CD4-positive, alpha-beta memory T cell (primary cell): ENCODE measurements at regions of chr20 and their contacts with region 1.

Region 1: DNA sequence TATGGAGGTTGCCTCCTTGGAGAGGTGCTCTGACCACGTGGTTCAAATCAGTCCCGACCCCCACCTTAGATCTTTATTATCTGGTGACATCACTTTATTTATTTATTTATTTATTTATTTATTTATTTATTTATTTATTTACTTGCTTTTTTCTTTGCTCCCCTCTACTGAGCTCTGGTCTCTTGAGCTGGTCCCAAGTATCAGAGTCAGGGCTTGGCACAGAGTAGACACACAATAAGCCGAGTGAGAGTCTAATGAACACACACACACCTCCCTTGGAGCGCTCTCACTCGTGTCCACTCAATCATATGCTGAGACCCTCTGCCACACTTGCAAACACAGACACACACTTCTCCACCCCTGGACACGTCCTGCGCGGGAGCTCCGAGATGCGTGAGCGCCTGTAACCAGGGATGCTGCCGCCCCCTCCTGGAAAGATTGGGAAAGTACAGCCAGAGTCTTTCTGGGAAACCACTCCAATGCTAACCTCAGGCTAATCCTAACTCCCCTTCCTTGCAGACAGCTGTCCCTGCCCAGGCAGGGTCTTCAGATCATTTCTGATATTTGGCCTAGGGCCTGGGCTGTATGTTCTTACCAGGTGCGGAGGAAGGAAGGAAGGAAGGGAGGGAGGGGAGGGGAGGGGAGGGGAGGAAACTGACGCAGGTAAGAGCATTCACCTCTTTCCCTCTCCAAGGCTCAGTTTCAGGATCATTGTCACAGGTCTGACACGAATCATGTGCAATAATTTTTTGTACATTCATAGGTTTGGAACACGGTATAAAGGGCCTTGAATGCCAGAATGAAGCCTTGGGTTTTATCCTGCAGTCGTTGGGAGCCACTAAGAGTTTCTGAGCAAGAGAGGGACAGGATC is 70.9 kb downstream of the STK35 start:
- DNase-seq: peak; percentile 48 to 59 (median 58)
- H3K4me3 ChIP-seq: no peak overlapping the region
- H3K4me3 Mint-ChIP-seq: no peak overlapping the region
- H3K27ac ChIP-seq: no peak overlapping the region
- H3K27ac Mint-ChIP-seq: peak overlapping the region in 1 of 7 donors; percentile 29
- H3K4me1 ChIP-seq: no peaks in the 10 kb centered on the region
- H3K4me1 Mint-ChIP-seq: peaks cover 2 to 4% (median 3%) of the 10 kb centered on the region in 4 donors
- H3K27me3 ChIP-seq: no peaks in the 10 kb centered on the region
- H3K27me3 Mint-ChIP-seq: peaks cover 3 to 6% of the 10 kb centered on the region in 2 donors

Region 2: GRCh38 chr20:1965520-1966351 is 206.8 kb before region 1 on chr20:
- CTCF ChIA-PET with region 1: interaction called, 151 read pairs
- POLR2A ChIA-PET with region 1: interaction called, 5 read pairs
- intact Hi-C with region 1: no loop called
- DNase-seq: peak; percentile 46 to 62 (median 54)
- H3K4me3 ChIP-seq: no peak overlapping the region
- H3K4me3 Mint-ChIP-seq: peak overlapping the region in 6 of 8 donors; percentile 11 to 62 (median 44)
- H3K27ac ChIP-seq: no peak overlapping the region
- H3K27ac Mint-ChIP-seq: no peak overlapping the region
- H3K4me1 ChIP-seq: peaks cover 10% of the 10 kb centered on the region
- H3K4me1 Mint-ChIP-seq: peaks cover 3 to 9% (median 5%) of the 10 kb centered on the region in 4 donors
- H3K27me3 ChIP-seq: no peaks in the 10 kb centered on the region
- H3K27me3 Mint-ChIP-seq: peaks cover 20 to 24% of the 10 kb centered on the region in 2 donors

Region 3: DNA sequence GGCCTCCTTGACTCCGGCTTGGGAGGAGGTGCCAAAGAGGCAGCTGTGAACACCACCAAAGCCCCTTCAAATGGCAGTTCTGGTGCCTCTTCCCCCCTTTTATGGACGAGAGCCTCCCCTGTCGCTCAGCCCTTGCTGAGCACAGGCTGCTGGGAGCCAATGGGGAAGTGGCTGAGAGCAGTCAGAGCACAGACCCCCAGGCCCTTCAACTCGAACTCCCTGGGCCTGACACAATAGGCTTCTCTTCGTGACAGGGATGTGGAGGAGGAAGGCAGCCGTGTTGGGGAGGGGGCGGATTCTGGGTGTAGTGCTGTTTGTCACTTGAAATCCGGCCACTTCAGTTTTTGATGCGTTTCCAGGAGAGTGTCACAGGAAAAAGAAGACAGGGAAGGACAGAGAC is 178.6 kb before region 1 on chr20 and contains the start of gene PDYN:
- CTCF ChIA-PET with region 1: no interaction called
- POLR2A ChIA-PET with region 1: no interaction called
- intact Hi-C with region 1: no loop called
- DNase-seq: no peak
- H3K4me3 ChIP-seq: no peak within 1 kb of the TSS
- H3K4me3 Mint-ChIP-seq: no peak within 1 kb of the TSS
- H3K27ac ChIP-seq: no peak within 1 kb of the TSS
- H3K27ac Mint-ChIP-seq: no peak within 1 kb of the TSS
- H3K4me1 ChIP-seq: no peaks in the 10 kb centered on the region
- H3K4me1 Mint-ChIP-seq: peaks cover 0 to 2% (median 0%) of the 10 kb centered on the region in 4 donors
- H3K27me3 ChIP-seq: peaks cover 10% of the 10 kb centered on the region
- H3K27me3 Mint-ChIP-seq: peaks cover 35 to 57% of the 10 kb centered on the region in 2 donors
- total RNA-seq, gene PDYN: not detected

Region 4: DNA sequence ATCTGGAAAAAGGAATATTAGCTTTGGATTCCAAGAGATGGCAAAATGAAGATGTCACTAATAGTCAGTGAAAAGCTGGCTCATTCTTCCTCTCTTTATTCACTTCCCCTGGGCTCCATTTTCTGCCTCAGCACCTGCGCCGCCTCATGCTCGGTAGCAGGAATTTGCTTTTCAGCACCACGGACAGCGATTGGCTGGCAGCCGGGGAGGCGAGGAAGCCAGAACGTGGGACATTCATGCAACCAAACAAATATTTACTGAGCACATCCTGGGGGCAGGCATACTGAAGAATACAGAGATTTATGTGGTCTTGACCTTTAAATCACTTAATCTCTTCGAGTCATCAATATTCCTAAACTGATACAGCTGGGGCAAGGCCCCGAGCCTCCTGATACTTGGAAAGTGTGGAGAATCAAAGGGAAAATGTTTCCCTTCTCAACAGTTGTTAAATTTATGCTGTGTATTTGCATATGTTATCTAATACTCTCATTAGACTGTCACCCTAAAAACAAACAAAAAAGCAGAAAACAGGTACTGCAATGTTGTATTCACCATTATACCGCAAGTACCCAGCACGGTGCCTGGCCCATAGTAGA is 166.6 kb before region 1 on chr20:
- CTCF ChIA-PET with region 1: interaction called, 52 read pairs
- POLR2A ChIA-PET with region 1: no interaction called
- intact Hi-C with region 1: no loop called
- DNase-seq: peak; percentile 39 to 51 (median 42)
- H3K4me3 ChIP-seq: no peak overlapping the region
- H3K4me3 Mint-ChIP-seq: no peak overlapping the region
- H3K27ac ChIP-seq: no peak overlapping the region
- H3K27ac Mint-ChIP-seq: no peak overlapping the region
- H3K4me1 ChIP-seq: no peaks in the 10 kb centered on the region
- H3K4me1 Mint-ChIP-seq: no peaks in the 10 kb centered on the region
- H3K27me3 ChIP-seq: peaks cover 4% of the 10 kb centered on the region
- H3K27me3 Mint-ChIP-seq: peaks cover 32 to 40% of the 10 kb centered on the region in 2 donors

Region 5: DNA sequence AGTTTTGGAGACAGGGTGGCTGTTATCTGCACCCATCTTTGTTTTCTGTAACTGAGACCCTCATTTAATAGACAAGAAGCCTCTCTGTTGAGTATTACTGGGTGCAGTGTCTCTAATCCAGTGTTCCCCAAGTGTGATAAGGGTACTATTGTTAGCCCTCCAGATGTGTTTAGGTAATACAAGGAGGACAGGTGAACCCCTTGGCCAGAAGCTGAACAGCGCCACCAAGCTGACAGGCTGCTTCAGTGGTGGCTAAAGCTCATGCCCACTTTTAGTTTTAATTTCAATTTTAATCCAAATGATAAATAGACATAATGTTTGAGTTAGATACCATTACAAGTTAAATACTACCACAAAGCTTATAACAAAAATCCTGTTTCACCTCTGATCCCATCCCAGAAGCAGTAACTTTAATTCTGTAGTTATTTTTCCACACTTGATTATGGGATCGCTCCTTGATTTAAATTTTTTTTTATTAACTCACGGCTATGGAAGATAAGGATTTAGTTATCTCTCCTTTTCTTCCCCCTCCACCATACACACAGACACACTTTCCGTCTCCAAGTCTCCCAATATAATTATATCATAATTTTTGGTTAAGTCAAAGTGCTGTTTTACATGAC is 79.3 kb before region 1 on chr20:
- CTCF ChIA-PET with region 1: no interaction called
- POLR2A ChIA-PET with region 1: no interaction called
- intact Hi-C with region 1: no loop called
- DNase-seq: peak in 2 of 5 donors; percentile 11 to 14
- H3K4me3 ChIP-seq: no peak overlapping the region
- H3K4me3 Mint-ChIP-seq: no peak overlapping the region
- H3K27ac ChIP-seq: no peak overlapping the region
- H3K27ac Mint-ChIP-seq: no peak overlapping the region
- H3K4me1 ChIP-seq: no peaks in the 10 kb centered on the region
- H3K4me1 Mint-ChIP-seq: no peaks in the 10 kb centered on the region
- H3K27me3 ChIP-seq: peaks cover 9% of the 10 kb centered on the region
- H3K27me3 Mint-ChIP-seq: peaks cover 32 to 34% of the 10 kb centered on the region in 2 donors

Region 6: GRCh38 chr20:2162125-2162822 is 10.3 kb before region 1 on chr20:
- CTCF ChIA-PET with region 1: interaction called, 20 read pairs
- POLR2A ChIA-PET with region 1: no interaction called
- intact Hi-C with region 1: no loop called
- DNase-seq: no peak
- H3K4me3 ChIP-seq: no peak overlapping the region
- H3K4me3 Mint-ChIP-seq: no peak overlapping the region
- H3K27ac ChIP-seq: no peak overlapping the region
- H3K27ac Mint-ChIP-seq: no peak overlapping the region
- H3K4me1 ChIP-seq: no peaks in the 10 kb centered on the region
- H3K4me1 Mint-ChIP-seq: no peaks in the 10 kb centered on the region
- H3K27me3 ChIP-seq: no peaks in the 10 kb centered on the region
- H3K27me3 Mint-ChIP-seq: no peaks in the 10 kb centered on the region

Region 7: GRCh38 chr20:2183381-2183780 is 10.8 kb after region 1 on chr20:
- CTCF ChIA-PET with region 1: interaction called, 19 read pairs
- POLR2A ChIA-PET with region 1: no interaction called
- intact Hi-C with region 1: no loop called
- DNase-seq: no peak
- H3K4me3 ChIP-seq: no peak overlapping the region
- H3K4me3 Mint-ChIP-seq: no peak overlapping the region
- H3K27ac ChIP-seq: no peak overlapping the region
- H3K27ac Mint-ChIP-seq: no peak overlapping the region
- H3K4me1 ChIP-seq: no peaks in the 10 kb centered on the region
- H3K4me1 Mint-ChIP-seq: peaks cover 0 to 4% (median 0%) of the 10 kb centered on the region in 4 donors
- H3K27me3 ChIP-seq: no peaks in the 10 kb centered on the region
- H3K27me3 Mint-ChIP-seq: no peaks in the 10 kb centered on the region

Region 8: GRCh38 chr20:2246069-2246491 is 73.5 kb after region 1 on chr20:
- CTCF ChIA-PET with region 1: no interaction called
- POLR2A ChIA-PET with region 1: no interaction called
- intact Hi-C with region 1: no loop called
- DNase-seq: no peak
- H3K4me3 ChIP-seq: no peak overlapping the region
- H3K4me3 Mint-ChIP-seq: no peak overlapping the region
- H3K27ac ChIP-seq: no peak overlapping the region
- H3K27ac Mint-ChIP-seq: no peak overlapping the region
- H3K4me1 ChIP-seq: no peaks in the 10 kb centered on the region
- H3K4me1 Mint-ChIP-seq: no peaks in the 10 kb centered on the region
- H3K27me3 ChIP-seq: no peaks in the 10 kb centered on the region
- H3K27me3 Mint-ChIP-seq: peaks cover 7 to 14% of the 10 kb centered on the region in 2 donors

Region 9: DNA sequence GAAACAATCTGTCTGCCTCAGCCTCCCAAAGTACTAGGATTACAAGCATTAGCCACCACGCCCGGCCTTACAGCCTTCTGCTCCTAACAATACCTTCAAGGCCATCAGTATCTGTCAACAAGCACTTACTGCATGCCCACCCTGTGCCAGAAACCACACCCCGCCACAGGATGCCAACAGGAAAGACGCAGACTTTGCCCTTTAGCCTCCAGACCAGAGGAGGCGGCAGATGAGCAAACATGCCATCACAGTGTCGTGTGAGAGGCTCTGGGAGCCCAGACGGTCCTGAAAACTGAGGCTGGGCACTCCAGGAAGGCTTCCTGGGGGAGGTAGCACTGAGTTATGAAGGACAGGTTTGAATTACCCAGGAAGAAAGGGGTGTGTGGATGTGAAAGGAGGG is 88.6 kb after region 1 on chr20:
- CTCF ChIA-PET with region 1: no interaction called
- POLR2A ChIA-PET with region 1: no interaction called
- intact Hi-C with region 1: no loop called
- DNase-seq: no peak
- H3K4me3 ChIP-seq: no peak overlapping the region
- H3K4me3 Mint-ChIP-seq: no peak overlapping the region
- H3K27ac ChIP-seq: no peak overlapping the region
- H3K27ac Mint-ChIP-seq: no peak overlapping the region
- H3K4me1 ChIP-seq: no peaks in the 10 kb centered on the region
- H3K4me1 Mint-ChIP-seq: peaks cover 0 to 2% (median 0%) of the 10 kb centered on the region in 4 donors
- H3K27me3 ChIP-seq: no peaks in the 10 kb centered on the region
- H3K27me3 Mint-ChIP-seq: peaks cover 4 to 19% of the 10 kb centered on the region in 2 donors